Adrenal gland (tissue), 19 donors: ENCODE measurements at regions of chr2 and their contacts with region 1.

Region 1: GRCh38 chr2:195498176-195498575 is 158.8 kb upstream of the SLC39A10 start:
- DNase-seq: peak; percentile 45 to 89 (median 69)
- H3K4me3 ChIP-seq: no peak overlapping the region
- H3K27ac ChIP-seq: no peak overlapping the region
- H3K4me1 ChIP-seq: no peaks in the 10 kb centered on the region
- H3K27me3 ChIP-seq: no peaks in the 10 kb centered on the region
- CTCF ChIP-seq: peak; percentile 28 to 68 (median 60)
- POLR2A ChIP-seq: no peak

Region 2: GRCh38 chr2:195337597-195337996 is 160.6 kb before region 1 on chr2:
- intact Hi-C with region 1: no loop called
- DNase-seq: no peak
- H3K4me3 ChIP-seq: no peak overlapping the region
- H3K27ac ChIP-seq: no peak overlapping the region
- H3K4me1 ChIP-seq: peaks cover 0 to 3% of the 10 kb centered on the region in 2 donors
- H3K27me3 ChIP-seq: no peaks in the 10 kb centered on the region
- CTCF ChIP-seq: no peak
- POLR2A ChIP-seq: no peak

Region 3: DNA sequence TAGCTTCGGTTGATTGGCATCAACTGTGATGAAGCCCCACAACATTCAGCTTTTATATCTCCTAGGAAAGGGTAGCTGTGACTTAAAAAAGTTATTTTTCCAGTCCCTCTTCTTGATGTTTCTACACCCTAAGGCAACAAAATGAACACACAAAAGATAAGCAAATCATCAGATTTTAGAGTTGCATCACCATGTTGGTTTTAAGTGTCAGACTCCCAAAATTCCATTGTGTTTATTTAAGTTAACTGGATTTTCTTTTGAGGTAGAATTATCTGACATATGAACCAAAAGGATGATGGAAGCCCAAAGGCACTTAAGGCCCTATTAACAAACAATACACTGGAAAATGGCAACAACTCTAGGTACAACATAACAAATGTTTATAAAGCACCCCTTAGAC is 102.8 kb before region 1 on chr2:
- intact Hi-C with region 1: no loop called
- DNase-seq: no peak
- H3K4me3 ChIP-seq: no peak overlapping the region
- H3K27ac ChIP-seq: no peak overlapping the region
- H3K4me1 ChIP-seq: no peaks in the 10 kb centered on the region
- H3K27me3 ChIP-seq: no peaks in the 10 kb centered on the region
- CTCF ChIP-seq: no peak
- POLR2A ChIP-seq: no peak

Region 4: DNA sequence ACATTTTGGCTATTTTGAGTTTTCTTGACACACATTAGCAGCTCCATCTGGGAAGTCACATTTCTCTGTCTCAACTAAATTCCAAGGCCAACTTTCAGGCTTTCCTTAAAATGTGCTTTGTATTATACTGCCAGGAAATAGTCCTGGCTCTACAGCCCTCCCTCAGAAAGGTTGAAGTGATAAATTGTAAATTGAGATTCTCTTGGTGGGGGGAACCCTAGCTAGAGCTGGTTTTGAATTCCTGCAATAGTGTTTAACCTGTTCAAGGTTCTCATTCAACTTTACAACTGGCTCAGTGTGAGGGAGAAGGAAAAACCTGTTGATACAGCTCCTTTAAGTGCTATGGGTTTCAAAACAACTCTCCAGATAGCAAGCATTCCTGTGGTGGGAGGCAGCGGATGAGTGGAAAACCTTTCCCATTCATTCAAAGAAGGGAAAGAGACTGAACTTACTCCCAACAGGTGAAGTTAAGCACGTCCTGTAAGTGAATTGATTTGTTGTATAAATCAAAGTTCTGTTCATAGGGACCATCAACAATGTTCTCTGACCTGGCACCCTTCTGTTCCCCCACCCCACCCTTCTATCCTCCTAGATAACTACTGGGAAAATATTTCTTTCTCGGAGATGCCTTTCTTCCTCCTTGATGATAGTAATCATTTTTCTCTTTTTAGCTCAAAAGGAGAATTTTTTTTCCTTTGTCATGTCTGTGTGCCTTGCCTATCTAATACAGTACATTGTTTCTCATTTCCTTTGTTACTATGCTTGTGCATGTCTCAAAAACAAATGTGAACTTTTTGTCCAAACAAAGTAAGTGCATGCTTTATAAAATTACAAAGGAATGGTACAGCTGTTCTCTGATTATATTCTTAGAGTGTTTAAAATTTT is 114.7 kb after region 1 on chr2:
- intact Hi-C with region 1: no loop called
- DNase-seq: no peak
- H3K4me3 ChIP-seq: no peak overlapping the region
- H3K27ac ChIP-seq: no peak overlapping the region
- H3K4me1 ChIP-seq: peaks cover 0 to 4% of the 10 kb centered on the region in 2 donors
- H3K27me3 ChIP-seq: no peaks in the 10 kb centered on the region
- CTCF ChIP-seq: no peak
- POLR2A ChIP-seq: no peak

Region 5: DNA sequence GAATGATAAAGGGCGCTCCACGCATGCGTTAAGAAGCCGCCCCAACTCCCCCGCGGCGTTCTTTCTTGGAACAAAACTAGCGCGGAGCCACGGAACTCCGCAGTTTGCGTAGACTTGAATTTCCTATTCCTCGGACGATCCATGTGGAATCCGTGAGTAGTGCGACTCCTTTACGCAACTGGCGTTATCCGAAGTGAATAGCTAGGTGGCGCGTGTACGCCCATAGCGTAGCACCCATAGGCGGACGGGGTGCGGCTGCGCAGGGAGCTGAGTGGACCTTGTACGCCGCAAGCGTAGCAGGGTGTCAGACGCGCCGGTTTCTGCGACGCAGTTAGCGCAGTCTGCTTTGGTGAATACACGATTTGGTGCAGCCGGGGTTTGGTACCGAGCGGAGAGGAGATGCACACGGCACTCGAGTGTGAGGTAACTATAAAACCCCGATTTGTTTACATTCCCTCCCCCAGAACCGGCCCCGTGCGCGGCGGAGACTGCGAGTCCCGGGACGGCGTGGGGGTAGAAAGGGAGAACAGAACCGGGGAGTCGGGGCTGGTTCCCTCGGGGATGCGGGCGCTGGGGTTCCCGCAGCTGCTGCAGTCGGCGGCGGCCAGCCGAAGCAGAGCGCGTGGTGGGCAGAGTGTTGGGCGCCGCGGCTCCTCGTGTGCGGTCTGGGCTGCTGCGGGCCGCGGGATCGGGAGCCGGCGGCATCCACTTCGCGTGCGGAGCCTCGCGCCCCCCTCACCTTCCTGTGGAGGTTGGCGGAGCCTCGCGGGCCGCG is 158.9 kb after region 1 on chr2 and contains the start of gene SLC39A10:
- intact Hi-C with region 1: loop called in 1 of 2 experiments (anchors 5 kb)
- DNase-seq: peak; percentile 96 to 99 (median 98)
- H3K4me3 ChIP-seq: peak within 1 kb of the TSS; percentile 77 to 92 (median 88)
- H3K27ac ChIP-seq: peak within 1 kb of the TSS; percentile 90 to 98 (median 98)
- H3K4me1 ChIP-seq: peaks cover 18 to 44% of the 10 kb centered on the region in 2 donors
- H3K27me3 ChIP-seq: no peaks in the 10 kb centered on the region
- CTCF ChIP-seq: peak; percentile 8 to 60 (median 41)
- POLR2A ChIP-seq: peak; percentile 91 to 96
- total RNA-seq, gene SLC39A10: 21.3 to 83.0 (median 34.6) TPM